ENCODE measurements at regions of chrX and their contacts with region 1.

Region 1: GRCh38 chrX:71458866-71459265 is 74.0 kb upstream of the OGT start:
- DNase-seq: no peak
- ATAC-seq: no peak
- H3K4me3 ChIP-seq: no peak overlapping the region
- H3K4me3 Mint-ChIP-seq: no peak overlapping the region
- H3K27ac ChIP-seq: no peak overlapping the region
- H3K27ac Mint-ChIP-seq: no peak overlapping the region
- H3K4me1 ChIP-seq: no peaks in the 10 kb centered on the region
- H3K4me1 Mint-ChIP-seq: no peaks in the 10 kb centered on the region
- H3K27me3 ChIP-seq: no peaks in the 10 kb centered on the region
- H3K27me3 Mint-ChIP-seq: peaks cover 0 to 16% of the 10 kb centered on the region in 2 donors

Region 2: GRCh38 chrX:71622576-71623450 is 163.9 kb after region 1 on chrX:
- CTCF ChIA-PET with region 1: no interaction called
- POLR2A ChIA-PET with region 1: interaction called in 1 of 2 experiments, 13 read pairs
- DNase-seq: peak; percentile 40 to 80 (median 59)
- ATAC-seq: peak; percentile 66 to 73 (median 71)
- H3K4me3 ChIP-seq: peak overlapping the region in 1 of 2 donors; percentile 26
- H3K4me3 Mint-ChIP-seq: peak overlapping the region; percentile 34 to 74 (median 62)
- H3K27ac ChIP-seq: peak overlapping the region; percentile 92
- H3K27ac Mint-ChIP-seq: peak overlapping the region; percentile 91 to 95
- H3K4me1 ChIP-seq: peaks cover 3 to 78% of the 10 kb centered on the region in 2 experiments
- H3K4me1 Mint-ChIP-seq: peaks cover 62 to 66% (median 63%) of the 10 kb centered on the region in 3 donors
- H3K27me3 ChIP-seq: no peaks in the 10 kb centered on the region
- H3K27me3 Mint-ChIP-seq: no peaks in the 10 kb centered on the region